ENCODE measurements at regions of chr5 and their contacts with region 1.

Region 1: DNA sequence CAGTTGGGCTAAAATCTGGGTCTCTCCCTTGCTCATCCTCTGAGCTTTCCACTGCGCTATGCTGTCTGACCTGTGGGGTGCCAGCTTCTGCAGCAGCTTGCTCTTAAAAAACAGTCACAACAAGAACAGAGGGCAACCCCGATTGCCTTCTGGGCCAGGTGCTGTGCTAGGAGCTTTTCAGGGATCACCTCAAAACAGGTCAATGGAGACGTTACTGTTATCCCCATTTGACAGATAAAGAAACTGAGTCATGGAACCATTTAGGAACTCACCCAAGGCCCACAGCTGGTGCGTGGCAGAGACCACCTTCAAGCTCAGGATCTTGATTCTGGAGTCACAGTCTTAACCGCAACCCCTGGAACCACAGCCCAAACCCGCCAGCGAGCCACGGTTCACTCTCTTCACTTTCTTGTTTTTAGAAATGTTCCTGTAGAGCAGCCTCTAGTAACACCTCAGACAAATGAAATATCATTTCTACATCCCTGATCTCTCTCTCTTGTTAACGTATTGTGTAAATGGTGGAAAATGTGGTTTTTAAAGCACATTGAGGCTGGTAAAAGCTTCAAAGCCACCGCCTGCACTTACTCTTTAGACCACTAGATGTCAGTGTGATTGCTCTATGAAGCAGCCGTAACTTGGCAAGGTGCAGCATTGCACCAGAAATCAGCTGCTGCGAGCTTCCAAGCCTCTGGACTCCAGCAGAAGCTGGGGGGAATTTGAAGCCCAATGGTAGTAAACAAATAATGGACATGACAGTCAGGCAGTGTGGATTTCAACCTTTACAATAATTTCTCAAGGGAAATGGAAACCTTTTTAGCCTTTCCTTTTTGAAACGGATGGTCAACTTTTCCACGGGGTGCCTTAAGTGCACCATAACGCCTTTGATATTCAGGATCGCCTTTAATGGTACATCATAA is 1.7 kb downstream of the FYB1 start:
- DNase-seq: peak; percentile 70
- ATAC-seq: peak; percentile 93
- H3K4me3 ChIP-seq: no peak overlapping the region
- H3K27ac ChIP-seq: no peak overlapping the region
- H3K4me1 ChIP-seq: peaks cover 13% of the 10 kb centered on the region
- H3K27me3 ChIP-seq: no peaks in the 10 kb centered on the region
- CTCF ChIP-seq: peak; percentile 89
- EP300 ChIP-seq: no peak
- POLR2A ChIP-seq: no peak
- RAD21 ChIP-seq: peak; percentile 73

Region 2: DNA sequence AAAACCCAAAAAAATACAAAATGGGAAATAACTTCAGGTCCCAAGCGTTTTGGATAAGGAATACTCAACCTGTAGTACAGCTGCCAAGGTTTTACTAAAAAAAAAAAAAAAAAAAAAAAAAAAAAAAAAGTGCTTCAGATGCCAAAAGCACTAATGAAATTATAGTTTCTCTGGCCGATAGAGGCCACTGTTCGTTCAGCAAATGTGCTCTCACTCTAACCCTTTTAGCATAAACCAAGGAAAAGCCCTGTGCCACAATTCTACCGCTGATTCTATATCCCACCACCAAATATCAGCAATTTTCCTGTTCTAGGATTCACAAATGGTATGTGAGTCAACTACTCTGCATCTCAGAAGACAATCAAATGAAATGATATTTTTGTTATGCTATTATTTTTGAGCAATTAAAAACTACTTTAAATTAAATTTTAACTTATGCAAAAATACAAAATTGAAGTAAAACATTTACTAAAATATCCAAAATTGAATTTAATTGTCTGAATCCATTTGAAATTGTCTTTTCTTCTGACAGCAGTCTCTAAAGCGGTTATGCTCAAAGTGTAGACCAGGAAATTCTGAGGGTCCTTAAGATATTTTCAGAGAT is 223.2 kb before region 1 on chr5:
- CTCF ChIA-PET with region 1: no interaction called
- POLR2A ChIA-PET with region 1: no interaction called
- in situ Hi-C with region 1: no loop called
- intact Hi-C with region 1: loop called (anchors 5 kb)
- DNase-seq: peak; percentile 64
- ATAC-seq: peak; percentile 83
- H3K4me3 ChIP-seq: no peak overlapping the region
- H3K27ac ChIP-seq: no peak overlapping the region
- H3K4me1 ChIP-seq: no peaks in the 10 kb centered on the region
- H3K27me3 ChIP-seq: no peaks in the 10 kb centered on the region
- CTCF ChIP-seq: peak; percentile 43
- EP300 ChIP-seq: no peak
- POLR2A ChIP-seq: no peak
- RAD21 ChIP-seq: no peak

Region 3: GRCh38 chr5:39194466-39195136 is 23.0 kb before region 1 on chr5:
- CTCF ChIA-PET with region 1: no interaction called
- POLR2A ChIA-PET with region 1: no interaction called
- in situ Hi-C with region 1: no loop called
- intact Hi-C with region 1: loop called (anchors 2 kb)
- DNase-seq: peak; percentile 40
- ATAC-seq: peak; percentile 96
- H3K4me3 ChIP-seq: no peak overlapping the region
- H3K27ac ChIP-seq: no peak overlapping the region
- H3K4me1 ChIP-seq: peaks cover 8% of the 10 kb centered on the region
- H3K27me3 ChIP-seq: 0 out of 5 replicates have a peak, but pooled peaks cover 0 to 10% of the 10 kb centered on the region in 2 experiments
- CTCF ChIP-seq: no peak
- EP300 ChIP-seq: no peak
- POLR2A ChIP-seq: no peak
- RAD21 ChIP-seq: no peak

Region 4: GRCh38 chr5:39319395-39319794 is 101.8 kb after region 1 on chr5:
- CTCF ChIA-PET with region 1: no interaction called
- POLR2A ChIA-PET with region 1: no interaction called
- in situ Hi-C with region 1: no loop called
- intact Hi-C with region 1: no loop called
- DNase-seq: no peak
- ATAC-seq: no peak
- H3K4me3 ChIP-seq: no peak overlapping the region
- H3K27ac ChIP-seq: no peak overlapping the region
- H3K4me1 ChIP-seq: no peaks in the 10 kb centered on the region
- H3K27me3 ChIP-seq: no peaks in the 10 kb centered on the region
- CTCF ChIP-seq: no peak
- EP300 ChIP-seq: no peak
- POLR2A ChIP-seq: no peak
- RAD21 ChIP-seq: no peak

Region 5: DNA sequence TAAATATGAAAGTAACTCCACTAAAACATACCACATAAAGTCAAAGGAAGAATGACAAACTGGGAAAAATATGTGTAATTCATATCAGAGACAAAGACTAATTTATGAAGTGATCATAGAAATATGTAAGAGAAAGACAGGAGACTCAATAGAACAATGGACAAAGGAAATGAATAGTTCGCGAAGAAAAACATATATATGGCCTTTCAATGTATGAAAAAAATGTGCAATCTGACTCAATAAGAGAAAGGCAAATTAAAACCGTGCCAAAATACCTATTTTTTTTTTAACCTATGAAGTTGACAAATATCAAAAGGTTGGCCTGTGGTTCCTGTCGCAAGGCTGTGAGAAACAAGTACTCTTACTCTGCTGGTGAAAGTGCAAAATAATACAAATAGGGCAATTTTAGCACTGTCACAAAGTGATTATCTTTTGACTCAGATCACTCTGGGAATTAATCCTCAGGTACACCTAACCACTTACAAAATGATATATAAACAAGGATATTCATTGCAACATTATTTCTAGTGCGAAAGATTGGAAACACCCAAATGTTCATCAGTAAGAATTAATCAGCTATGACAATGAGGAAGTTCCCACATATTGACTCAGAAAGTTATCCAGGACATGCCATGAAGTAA is 143.0 kb after region 1 on chr5:
- CTCF ChIA-PET with region 1: no interaction called
- POLR2A ChIA-PET with region 1: no interaction called
- in situ Hi-C with region 1: no loop called
- intact Hi-C with region 1: loop called (anchors 10 kb)
- DNase-seq: no peak
- ATAC-seq: no peak
- H3K4me3 ChIP-seq: no peak overlapping the region
- H3K27ac ChIP-seq: no peak overlapping the region
- H3K4me1 ChIP-seq: no peaks in the 10 kb centered on the region
- H3K27me3 ChIP-seq: no peaks in the 10 kb centered on the region
- CTCF ChIP-seq: no peak
- EP300 ChIP-seq: no peak
- POLR2A ChIP-seq: no peak
- RAD21 ChIP-seq: no peak

Region 6: DNA sequence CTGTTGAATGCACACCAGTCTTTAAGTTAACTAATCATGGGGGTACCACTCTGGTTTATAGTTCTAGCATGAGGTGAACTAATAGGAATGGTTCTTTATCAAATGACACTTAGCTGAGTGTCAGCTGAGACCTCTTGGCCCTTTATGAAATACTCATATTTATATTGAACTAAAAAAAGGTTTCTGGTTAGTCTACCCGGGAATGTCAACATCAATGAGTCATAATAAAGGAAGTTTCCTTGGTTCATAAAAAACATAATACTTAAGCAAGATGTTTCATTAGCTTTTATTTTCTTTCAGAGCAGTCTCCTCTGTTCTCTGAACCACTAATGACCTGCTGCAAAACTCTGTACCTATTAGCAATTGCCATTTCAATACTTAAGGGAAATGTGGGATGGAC is 193.4 kb after region 1 on chr5:
- CTCF ChIA-PET with region 1: no interaction called
- POLR2A ChIA-PET with region 1: no interaction called
- in situ Hi-C with region 1: no loop called
- intact Hi-C with region 1: no loop called
- DNase-seq: no peak
- ATAC-seq: no peak
- H3K4me3 ChIP-seq: no peak overlapping the region
- H3K27ac ChIP-seq: no peak overlapping the region
- H3K4me1 ChIP-seq: peaks cover 58% of the 10 kb centered on the region
- H3K27me3 ChIP-seq: no peaks in the 10 kb centered on the region
- CTCF ChIP-seq: no peak
- EP300 ChIP-seq: no peak
- POLR2A ChIP-seq: no peak
- RAD21 ChIP-seq: no peak

Region 7: DNA sequence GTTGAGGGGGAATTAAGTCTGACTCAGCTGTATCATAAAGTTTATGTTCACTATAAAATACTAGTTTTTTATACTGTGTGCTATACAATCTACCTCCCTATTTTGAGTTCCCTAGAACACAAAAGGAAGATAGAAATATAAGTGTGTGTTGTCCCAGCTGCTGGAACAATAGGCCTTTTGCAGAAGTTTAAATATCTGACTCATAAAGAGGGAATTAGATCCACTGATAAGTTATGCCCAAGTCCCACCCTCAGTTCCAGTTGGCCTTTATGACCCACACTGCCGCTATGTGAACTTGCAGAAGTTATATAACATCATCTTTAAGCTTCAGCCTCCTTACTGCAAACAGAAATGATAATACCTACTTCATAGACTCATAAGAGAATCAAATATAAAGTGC is 295.6 kb after region 1 on chr5:
- CTCF ChIA-PET with region 1: no interaction called
- POLR2A ChIA-PET with region 1: no interaction called
- in situ Hi-C with region 1: no loop called
- intact Hi-C with region 1: no loop called
- DNase-seq: peak; percentile 12
- ATAC-seq: no peak
- H3K4me3 ChIP-seq: no peak overlapping the region
- H3K27ac ChIP-seq: no peak overlapping the region
- H3K4me1 ChIP-seq: no peaks in the 10 kb centered on the region
- H3K27me3 ChIP-seq: peaks cover 0 to 3% of the 10 kb centered on the region in 2 experiments; a peak in 1 of 5 replicates
- CTCF ChIP-seq: no peak
- EP300 ChIP-seq: no peak
- POLR2A ChIP-seq: no peak
- RAD21 ChIP-seq: no peak

Region 8: GRCh38 chr5:39547553-39548154 is 330.0 kb after region 1 on chr5:
- CTCF ChIA-PET with region 1: interaction called, 5 read pairs
- POLR2A ChIA-PET with region 1: no interaction called
- in situ Hi-C with region 1: loop called (anchors 25 kb)
- intact Hi-C with region 1: loop called (anchors 5 kb)
- DNase-seq: peak; percentile 41
- ATAC-seq: peak; percentile 74
- H3K4me3 ChIP-seq: no peak overlapping the region
- H3K27ac ChIP-seq: no peak overlapping the region
- H3K4me1 ChIP-seq: no peaks in the 10 kb centered on the region
- H3K27me3 ChIP-seq: peaks cover 0 to 8% of the 10 kb centered on the region in 2 experiments; a peak in 1 of 5 replicates
- CTCF ChIP-seq: peak; percentile 72
- EP300 ChIP-seq: no peak
- POLR2A ChIP-seq: no peak
- RAD21 ChIP-seq: peak; percentile 67

Region 9: DNA sequence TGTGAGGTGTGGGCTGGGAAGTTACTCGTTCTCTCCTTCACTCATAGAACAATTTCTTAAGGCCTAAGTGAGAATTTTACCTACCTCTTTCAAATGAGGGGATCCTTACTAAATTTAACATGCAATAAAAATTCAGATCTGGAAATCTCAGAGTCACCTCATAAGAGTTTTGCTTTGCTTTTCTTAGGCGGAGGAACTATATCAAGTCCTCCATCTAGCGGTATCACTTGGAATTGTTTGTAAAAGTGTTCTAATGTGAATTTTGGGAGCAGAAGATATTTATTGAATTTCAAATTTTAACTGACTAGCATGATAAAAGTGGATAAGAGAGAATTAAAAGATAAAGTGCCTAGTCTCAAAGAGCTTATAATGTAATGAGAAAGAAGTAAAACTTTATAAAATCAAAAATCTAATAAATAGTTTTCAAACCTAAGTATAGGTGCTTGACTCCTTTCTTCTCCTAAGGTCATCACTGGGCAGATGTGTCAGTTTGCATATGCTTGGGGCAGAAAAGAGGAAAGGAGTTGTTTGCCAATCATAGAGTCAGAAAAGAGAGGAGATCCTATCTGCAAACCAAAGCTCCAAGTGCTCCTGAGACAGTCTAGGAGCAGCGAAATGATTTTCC is 352.9 kb after region 1 on chr5:
- CTCF ChIA-PET with region 1: no interaction called
- POLR2A ChIA-PET with region 1: no interaction called
- in situ Hi-C with region 1: loop called (anchors 25 kb)
- intact Hi-C with region 1: loop called (anchors 1 kb)
- DNase-seq: peak; percentile 24
- ATAC-seq: no peak
- H3K4me3 ChIP-seq: no peak overlapping the region
- H3K27ac ChIP-seq: no peak overlapping the region
- H3K4me1 ChIP-seq: peaks cover 7% of the 10 kb centered on the region
- H3K27me3 ChIP-seq: no peaks in the 10 kb centered on the region
- CTCF ChIP-seq: peak; percentile 40
- EP300 ChIP-seq: no peak
- POLR2A ChIP-seq: no peak
- RAD21 ChIP-seq: no peak

Measured in HepG2 (cell line).